Activated CD4-positive, alpha-beta T cell treated with anti-CD3 and anti-CD28 coated beads for 36 hours (primary cell): ENCODE measurements at regions of chr7 and their contacts with region 1.

Region 1: DNA sequence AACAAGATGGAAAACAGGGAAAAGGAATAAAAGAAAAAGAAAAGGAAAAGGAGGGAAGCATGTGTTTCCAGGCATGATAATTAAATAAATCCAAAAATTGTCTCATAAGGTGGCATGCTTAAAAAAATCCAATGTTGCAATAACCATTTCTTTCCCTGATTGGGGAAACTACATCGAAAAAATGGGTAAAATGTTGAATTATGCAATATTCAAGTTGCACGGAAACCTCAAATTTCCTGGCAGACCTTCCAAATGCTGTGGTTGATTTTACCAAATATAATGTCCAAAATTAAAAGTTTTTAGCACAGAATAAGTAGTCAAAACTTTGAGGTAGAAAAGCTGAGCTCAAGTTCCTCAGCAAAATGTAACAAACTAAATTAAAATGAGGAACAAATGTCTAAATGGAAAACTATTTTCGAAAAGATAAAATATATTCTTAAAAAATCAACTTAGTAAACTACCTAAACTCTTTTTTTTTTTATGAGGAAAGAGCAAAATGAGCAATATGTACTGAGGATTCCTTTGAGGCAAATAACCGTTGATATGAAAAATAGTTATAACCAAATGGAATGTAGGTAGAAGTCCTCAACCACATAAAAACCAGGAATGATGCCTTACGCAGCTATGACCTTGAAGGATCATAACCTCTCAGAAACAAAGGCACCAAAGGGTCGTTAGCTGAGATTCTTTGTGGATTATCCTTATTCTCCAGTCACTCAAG is 52.6 kb downstream of the MACC1 start:
- DNase-seq: no peak
- ATAC-seq: no peak
- H3K4me3 Mint-ChIP-seq: no peak overlapping the region
- H3K27ac Mint-ChIP-seq: no peak overlapping the region
- H3K4me1 Mint-ChIP-seq: no peaks in the 10 kb centered on the region
- H3K27me3 Mint-ChIP-seq: no peaks in the 10 kb centered on the region

Region 2: DNA sequence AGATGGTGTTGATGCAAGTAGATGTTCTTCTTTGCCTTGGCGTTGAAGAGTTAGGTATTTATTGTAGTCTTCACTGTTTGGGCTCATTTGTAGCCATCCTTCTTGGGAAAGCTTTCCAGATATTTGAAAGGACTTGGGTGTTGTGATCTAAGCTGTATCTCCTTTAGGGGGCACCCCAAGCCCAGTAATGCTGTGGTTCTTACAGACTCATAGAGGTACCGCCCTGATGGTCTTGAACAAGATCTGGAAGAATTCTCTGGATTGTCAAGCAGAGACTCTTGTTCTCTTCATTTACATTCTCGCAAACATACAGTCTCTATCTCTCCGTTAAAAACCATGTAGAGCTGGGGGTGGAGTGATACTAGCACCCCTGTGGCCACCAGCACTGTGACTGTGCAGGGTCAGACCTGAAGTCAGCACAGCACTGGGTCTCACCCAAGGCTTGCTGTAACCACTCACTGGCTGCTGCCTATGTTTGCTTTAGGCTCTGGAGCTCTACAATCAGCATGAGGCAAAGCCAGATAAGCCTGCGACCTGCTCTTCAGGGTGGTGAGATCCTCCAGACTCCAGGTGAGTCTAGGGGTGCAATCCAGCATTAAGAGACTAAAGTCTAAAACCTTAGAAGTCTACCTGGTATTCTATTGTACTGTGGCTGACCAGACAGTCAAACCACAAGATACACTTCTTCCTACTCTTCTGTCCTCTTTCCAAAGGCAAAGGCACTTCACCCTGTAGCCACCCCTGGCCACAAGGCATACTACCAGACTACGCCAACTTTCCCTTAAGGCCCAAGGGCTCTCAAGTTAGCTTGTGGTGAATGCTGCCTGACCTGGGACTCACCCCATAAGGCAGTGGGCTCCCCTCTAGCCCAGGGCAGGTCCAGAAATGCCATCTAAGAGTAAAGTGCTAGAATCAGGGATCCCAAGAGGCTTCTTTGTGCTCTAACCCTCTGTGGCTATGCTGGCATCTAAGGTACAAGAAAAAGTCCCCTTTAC is 181.4 kb before region 1 on chr7:
- CTCF ChIA-PET with region 1: no interaction called
- POLR2A ChIA-PET with region 1: no interaction called
- intact Hi-C with region 1: loop called in 1 of 2 experiments (anchors 10 kb)
- DNase-seq: peak; percentile 29
- ATAC-seq: no peak
- H3K4me3 Mint-ChIP-seq: no peak overlapping the region
- H3K27ac Mint-ChIP-seq: no peak overlapping the region
- H3K4me1 Mint-ChIP-seq: no peaks in the 10 kb centered on the region
- H3K27me3 Mint-ChIP-seq: no peaks in the 10 kb centered on the region

Region 3: GRCh38 chr7:20035279-20035875 is 129.2 kb before region 1 on chr7:
- CTCF ChIA-PET with region 1: no interaction called
- POLR2A ChIA-PET with region 1: no interaction called
- intact Hi-C with region 1: no loop called
- DNase-seq: no peak
- ATAC-seq: no peak
- H3K4me3 Mint-ChIP-seq: no peak overlapping the region
- H3K27ac Mint-ChIP-seq: no peak overlapping the region
- H3K4me1 Mint-ChIP-seq: no peaks in the 10 kb centered on the region
- H3K27me3 Mint-ChIP-seq: no peaks in the 10 kb centered on the region